Caco-2 (cell line): ENCODE measurements at regions of chr7 and their contacts with region 1.

Region 1: DNA sequence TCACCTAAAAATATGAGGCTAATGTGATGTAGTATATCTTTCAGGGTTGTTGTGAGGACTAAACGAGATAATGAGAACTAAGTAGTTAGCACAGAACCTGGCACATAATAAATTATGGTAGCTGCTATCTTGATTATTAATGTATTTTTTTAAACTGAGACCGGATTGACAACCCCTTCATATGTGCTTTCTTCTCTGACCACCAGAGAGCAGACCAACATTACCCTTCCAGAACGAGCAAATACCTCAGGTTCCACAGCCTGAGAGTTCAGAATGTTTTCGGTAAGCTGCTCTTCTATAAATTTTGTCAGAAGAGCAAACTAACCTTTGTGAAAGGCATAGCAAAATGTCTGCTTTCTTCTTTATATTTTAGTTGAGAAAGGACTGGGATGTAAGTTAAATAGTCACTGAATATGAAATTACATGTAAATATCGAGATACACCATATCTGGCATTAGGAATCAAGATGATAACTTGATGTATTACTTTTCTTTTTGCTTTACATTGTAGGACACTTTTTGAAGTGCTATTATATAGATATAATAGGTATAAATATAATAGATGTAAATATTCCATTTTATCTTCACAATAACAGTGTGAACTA is 13.6 kb upstream of the BPGM start:
- DNase-seq: peak in 1 of 2 experiments; percentile 49
- H3K4me3 ChIP-seq: no peak overlapping the region
- H3K4me3 Mint-ChIP-seq: no peak overlapping the region
- H3K27ac Mint-ChIP-seq: no peak overlapping the region
- H3K4me1 ChIP-seq: no peaks in the 10 kb centered on the region
- H3K4me1 Mint-ChIP-seq: no peaks in the 10 kb centered on the region
- H3K27me3 ChIP-seq: no peaks in the 10 kb centered on the region; the same call in 1 of the 2 replicates
- H3K27me3 Mint-ChIP-seq: peaks cover 6% of the 10 kb centered on the region
- CTCF ChIP-seq: peak; percentile 63 to 65

Region 2: GRCh38 chr7:134458806-134459698 is 174.0 kb before region 1 on chr7 and contains the start of gene AKR1B1:
- CTCF ChIA-PET with region 1: no interaction called
- POLR2A ChIA-PET with region 1: no interaction called
- intact Hi-C with region 1: no loop called
- DNase-seq: peak; percentile 83 to 84
- H3K4me3 ChIP-seq: peak within 1 kb of the TSS; percentile 64
- H3K4me3 Mint-ChIP-seq: peak within 1 kb of the TSS; percentile 59
- H3K27ac Mint-ChIP-seq: no peak within 1 kb of the TSS
- H3K4me1 ChIP-seq: peaks cover 4% of the 10 kb centered on the region; the same call in 1 of the 2 replicates
- H3K4me1 Mint-ChIP-seq: no peaks in the 10 kb centered on the region
- H3K27me3 ChIP-seq: no peaks in the 10 kb centered on the region
- H3K27me3 Mint-ChIP-seq: no peaks in the 10 kb centered on the region
- CTCF ChIP-seq: peak in 1 of 2 experiments; percentile 47
- total RNA-seq, gene AKR1B1: 58.6 and 62.8 TPM in 2 replicates

Region 3: GRCh38 chr7:134602881-134603451 is 30.1 kb before region 1 on chr7:
- CTCF ChIA-PET with region 1: no interaction called
- POLR2A ChIA-PET with region 1: no interaction called
- intact Hi-C with region 1: no loop called
- DNase-seq: no peak
- H3K4me3 ChIP-seq: no peak overlapping the region
- H3K4me3 Mint-ChIP-seq: no peak overlapping the region
- H3K27ac Mint-ChIP-seq: no peak overlapping the region
- H3K4me1 ChIP-seq: peaks cover 7% of the 10 kb centered on the region; the same call in 1 of the 2 replicates
- H3K4me1 Mint-ChIP-seq: peaks cover 7% of the 10 kb centered on the region
- H3K27me3 ChIP-seq: no peaks in the 10 kb centered on the region; the same call in 1 of the 2 replicates
- H3K27me3 Mint-ChIP-seq: peaks cover 10% of the 10 kb centered on the region
- CTCF ChIP-seq: no peak

Region 4: GRCh38 chr7:134701272-134701671 is 68.2 kb after region 1 on chr7:
- CTCF ChIA-PET with region 1: interaction called, 5 read pairs
- POLR2A ChIA-PET with region 1: no interaction called
- intact Hi-C with region 1: loop called (anchors 1 kb)
- DNase-seq: peak in 1 of 2 experiments; percentile 28
- H3K4me3 ChIP-seq: no peak overlapping the region
- H3K4me3 Mint-ChIP-seq: no peak overlapping the region
- H3K27ac Mint-ChIP-seq: no peak overlapping the region
- H3K4me1 ChIP-seq: peaks cover 24% of the 10 kb centered on the region
- H3K4me1 Mint-ChIP-seq: peaks cover 7% of the 10 kb centered on the region
- H3K27me3 ChIP-seq: no peaks in the 10 kb centered on the region
- H3K27me3 Mint-ChIP-seq: no peaks in the 10 kb centered on the region
- CTCF ChIP-seq: peak in 1 of 2 experiments; percentile 35

Region 5: GRCh38 chr7:134755401-134756022 is 122.5 kb after region 1 on chr7:
- CTCF ChIA-PET with region 1: no interaction called
- POLR2A ChIA-PET with region 1: no interaction called
- intact Hi-C with region 1: loop called (anchors 2 kb)
- DNase-seq: peak; percentile 41 to 58
- H3K4me3 ChIP-seq: no peak overlapping the region
- H3K4me3 Mint-ChIP-seq: no peak overlapping the region
- H3K27ac Mint-ChIP-seq: no peak overlapping the region
- H3K4me1 ChIP-seq: peaks cover 16% of the 10 kb centered on the region
- H3K4me1 Mint-ChIP-seq: peaks cover 24% of the 10 kb centered on the region
- H3K27me3 ChIP-seq: no peaks in the 10 kb centered on the region
- H3K27me3 Mint-ChIP-seq: no peaks in the 10 kb centered on the region
- CTCF ChIP-seq: peak; percentile 54 to 55

Region 6: GRCh38 chr7:134845468-134845867 is 212.4 kb after region 1 on chr7:
- CTCF ChIA-PET with region 1: no interaction called
- POLR2A ChIA-PET with region 1: no interaction called
- intact Hi-C with region 1: loop called (anchors 1 kb)
- DNase-seq: peak; percentile 48 to 53
- H3K4me3 ChIP-seq: no peak overlapping the region
- H3K4me3 Mint-ChIP-seq: no peak overlapping the region
- H3K27ac Mint-ChIP-seq: no peak overlapping the region
- H3K4me1 ChIP-seq: peaks cover 22% of the 10 kb centered on the region
- H3K4me1 Mint-ChIP-seq: peaks cover 33% of the 10 kb centered on the region
- H3K27me3 ChIP-seq: no peaks in the 10 kb centered on the region
- H3K27me3 Mint-ChIP-seq: no peaks in the 10 kb centered on the region
- CTCF ChIP-seq: peak; percentile 42 to 66

Region 7: DNA sequence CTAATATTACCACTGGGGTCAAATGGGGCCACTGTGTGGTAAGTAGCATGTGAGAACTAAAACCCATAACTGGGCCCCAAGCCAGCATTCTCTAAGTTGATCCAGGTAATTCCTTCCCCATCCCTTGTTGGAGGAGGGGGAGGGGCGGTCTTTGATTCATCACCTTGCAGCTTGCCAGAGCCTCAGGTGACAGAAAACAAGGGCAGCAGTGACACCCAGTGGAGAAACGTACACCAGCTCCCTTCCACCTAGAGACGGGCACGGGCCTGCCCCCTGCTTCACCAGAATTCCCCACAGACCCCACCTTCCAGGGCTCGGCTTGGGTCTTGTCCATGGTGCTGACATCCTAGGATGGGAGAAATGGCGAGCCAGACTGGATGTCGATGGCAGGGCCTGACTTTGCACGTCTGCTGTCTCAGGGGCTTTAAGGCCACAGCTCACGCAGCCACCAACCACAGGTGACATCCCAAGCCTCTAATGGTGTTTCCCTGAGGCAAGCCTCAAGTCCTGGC is 702.6 kb after region 1 on chr7:
- CTCF ChIA-PET with region 1: no interaction called
- POLR2A ChIA-PET with region 1: no interaction called
- intact Hi-C with region 1: loop called (anchors 1 kb)
- DNase-seq: peak; percentile 93 to 94
- H3K4me3 ChIP-seq: no peak overlapping the region
- H3K4me3 Mint-ChIP-seq: no peak overlapping the region
- H3K27ac Mint-ChIP-seq: no peak overlapping the region
- H3K4me1 ChIP-seq: peaks cover 5% of the 10 kb centered on the region; the same call in 1 of the 2 replicates
- H3K4me1 Mint-ChIP-seq: peaks cover 7% of the 10 kb centered on the region
- H3K27me3 ChIP-seq: no peaks in the 10 kb centered on the region
- H3K27me3 Mint-ChIP-seq: peaks cover 8% of the 10 kb centered on the region
- CTCF ChIP-seq: peak; percentile 70 to 82